Colonic mucosa (tissue), 4 donors: ENCODE measurements at regions of chr6 and their contacts with region 1.

Region 1: DNA sequence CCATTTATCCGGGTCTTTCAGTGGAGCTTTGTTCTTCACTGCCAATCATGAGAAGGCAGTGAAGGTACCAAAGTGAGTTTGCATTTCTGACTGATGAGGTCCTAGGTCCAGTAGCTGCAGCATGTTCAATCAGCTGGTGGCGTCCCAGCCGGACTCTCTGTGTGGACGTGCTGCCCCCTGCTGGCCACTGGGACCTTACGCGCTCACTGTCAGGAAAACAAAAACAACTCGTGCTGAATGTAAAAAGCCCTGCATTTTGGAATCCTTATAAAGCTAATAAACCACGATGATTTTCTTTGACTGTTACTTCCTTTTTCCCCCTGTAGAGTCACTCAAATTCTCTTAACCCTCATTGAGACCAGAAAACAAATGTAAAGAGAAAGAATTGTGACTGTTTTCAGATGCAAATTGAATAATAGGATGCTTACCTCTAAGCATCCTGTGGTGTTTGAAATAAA is 4.9 kb upstream of the CD24 start:
- DNase-seq: peak; percentile 92
- H3K4me3 ChIP-seq: no peak overlapping the region
- H3K27ac ChIP-seq: no peak overlapping the region
- H3K4me1 ChIP-seq: no peaks in the 10 kb centered on the region
- H3K27me3 ChIP-seq: peaks cover 6% of the 10 kb centered on the region
- CTCF ChIP-seq: peak; percentile 93

Region 2: GRCh38 chr6:106439446-106439845 is 540.0 kb before region 1 on chr6:
- intact Hi-C with region 1: loop called (anchors 5 kb)
- DNase-seq: no peak
- H3K4me3 ChIP-seq: no peak overlapping the region
- H3K27ac ChIP-seq: no peak overlapping the region
- H3K4me1 ChIP-seq: no peaks in the 10 kb centered on the region
- H3K27me3 ChIP-seq: no peaks in the 10 kb centered on the region
- CTCF ChIP-seq: no peak

Region 3: GRCh38 chr6:106444777-106445507 is 534.5 kb before region 1 on chr6:
- intact Hi-C with region 1: loop called (anchors 5 kb)
- DNase-seq: peak; percentile 54
- H3K4me3 ChIP-seq: no peak overlapping the region
- H3K27ac ChIP-seq: no peak overlapping the region
- H3K4me1 ChIP-seq: no peaks in the 10 kb centered on the region
- H3K27me3 ChIP-seq: no peaks in the 10 kb centered on the region
- CTCF ChIP-seq: peak; percentile 71

Region 4: GRCh38 chr6:106608062-106608668 is 371.3 kb before region 1 on chr6:
- intact Hi-C with region 1: loop called (anchors 5 kb)
- DNase-seq: peak; percentile 55
- H3K4me3 ChIP-seq: no peak overlapping the region
- H3K27ac ChIP-seq: no peak overlapping the region
- H3K4me1 ChIP-seq: no peaks in the 10 kb centered on the region
- H3K27me3 ChIP-seq: no peaks in the 10 kb centered on the region
- CTCF ChIP-seq: peak; percentile 56

Region 5: DNA sequence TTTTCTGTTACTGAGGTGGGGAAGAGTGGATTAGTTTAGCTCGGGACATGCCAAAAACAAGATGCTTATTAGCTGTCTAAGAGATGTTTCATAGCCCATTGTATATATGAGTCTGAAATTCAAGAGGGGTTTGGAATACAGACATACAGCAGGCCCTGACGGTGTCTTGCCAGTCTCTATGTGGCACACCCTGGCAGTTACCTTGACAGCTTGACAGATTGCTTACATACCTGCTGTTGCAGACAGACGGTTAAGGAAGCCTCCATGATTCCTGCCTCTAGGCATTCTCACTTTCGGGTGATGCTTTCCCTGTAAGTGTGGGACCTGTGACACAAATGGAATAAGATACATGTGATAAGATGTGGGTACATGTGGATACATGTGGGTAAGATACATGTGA is 255.1 kb before region 1 on chr6:
- intact Hi-C with region 1: no loop called
- DNase-seq: no peak
- H3K4me3 ChIP-seq: no peak overlapping the region
- H3K27ac ChIP-seq: no peak overlapping the region
- H3K4me1 ChIP-seq: no peaks in the 10 kb centered on the region
- H3K27me3 ChIP-seq: no peaks in the 10 kb centered on the region
- CTCF ChIP-seq: no peak

Region 6: DNA sequence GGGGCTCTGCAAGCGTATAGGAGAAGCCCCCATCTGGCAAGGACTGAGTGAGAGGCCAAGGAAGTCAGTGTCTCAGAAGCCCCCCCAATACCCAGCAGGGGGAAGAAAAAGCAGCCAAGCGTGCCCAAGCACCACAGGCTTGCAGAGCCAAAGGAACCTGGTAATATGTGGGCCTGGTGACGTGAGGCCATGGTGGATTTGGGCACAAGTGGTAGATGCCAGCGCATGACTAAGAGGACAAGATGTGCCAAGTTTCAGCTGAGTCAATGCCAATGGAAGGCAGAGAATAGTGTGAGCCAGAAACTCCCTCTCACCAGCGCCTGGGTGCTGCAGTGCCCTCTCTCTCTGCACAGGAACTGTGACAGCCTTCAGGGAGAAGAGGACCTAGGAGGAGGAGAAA is 240.1 kb before region 1 on chr6:
- intact Hi-C with region 1: loop called (anchors 10 kb)
- DNase-seq: no peak
- H3K4me3 ChIP-seq: no peak overlapping the region
- H3K27ac ChIP-seq: no peak overlapping the region
- H3K4me1 ChIP-seq: peaks cover 4% of the 10 kb centered on the region
- H3K27me3 ChIP-seq: no peaks in the 10 kb centered on the region
- CTCF ChIP-seq: no peak